ENCODE measurements at regions of chr9 and their contacts with region 1.

Region 1: DNA sequence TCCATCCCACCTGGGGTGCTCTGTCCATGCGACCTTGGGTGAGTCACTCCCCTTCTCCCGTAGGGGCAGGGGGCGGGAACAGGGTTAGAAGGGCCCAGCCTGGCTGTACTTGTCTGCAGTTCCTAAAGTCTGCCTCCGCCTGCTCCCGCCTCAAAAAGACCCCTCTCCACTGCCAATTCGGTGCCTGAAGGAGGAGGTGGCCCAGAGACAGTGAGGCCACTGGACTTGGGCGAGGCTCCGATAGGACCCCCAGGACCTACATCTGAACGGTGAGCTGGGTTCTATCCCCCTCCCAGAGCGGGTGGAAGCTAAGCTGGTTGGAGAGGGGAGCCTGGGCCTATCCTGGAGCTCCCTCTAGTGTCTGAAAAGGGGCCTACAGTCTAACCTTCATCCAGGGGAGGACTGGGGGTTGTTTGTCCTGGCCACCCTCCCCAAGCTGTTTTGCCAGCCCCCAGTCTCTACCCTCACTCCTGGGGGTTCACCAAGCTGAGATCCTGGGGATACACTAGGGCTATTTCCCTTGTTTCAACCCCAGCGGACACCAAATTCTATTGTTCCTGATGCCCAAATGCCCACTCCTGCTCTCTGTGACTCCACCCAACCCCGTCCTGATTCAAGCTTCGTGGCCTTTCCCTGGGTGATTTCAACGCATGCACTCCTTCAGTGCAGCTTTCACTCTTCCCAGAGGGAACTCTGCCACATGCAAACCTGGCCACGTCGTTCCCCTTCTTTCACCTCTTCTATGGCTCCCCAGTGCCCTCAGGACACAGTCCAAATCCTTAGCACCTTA is 6.1 kb upstream of the CRB2 start:
- DNase-seq: peak; percentile 84
- ATAC-seq: peak; percentile 78
- H3K4me3 Mint-ChIP-seq: no peak overlapping the region
- H3K27ac Mint-ChIP-seq: no peak overlapping the region
- H3K4me1 Mint-ChIP-seq: peaks cover 11% of the 10 kb centered on the region
- H3K27me3 Mint-ChIP-seq: peaks cover 15% of the 10 kb centered on the region
- CTCF ChIP-seq: peak; percentile 97

Region 2: DNA sequence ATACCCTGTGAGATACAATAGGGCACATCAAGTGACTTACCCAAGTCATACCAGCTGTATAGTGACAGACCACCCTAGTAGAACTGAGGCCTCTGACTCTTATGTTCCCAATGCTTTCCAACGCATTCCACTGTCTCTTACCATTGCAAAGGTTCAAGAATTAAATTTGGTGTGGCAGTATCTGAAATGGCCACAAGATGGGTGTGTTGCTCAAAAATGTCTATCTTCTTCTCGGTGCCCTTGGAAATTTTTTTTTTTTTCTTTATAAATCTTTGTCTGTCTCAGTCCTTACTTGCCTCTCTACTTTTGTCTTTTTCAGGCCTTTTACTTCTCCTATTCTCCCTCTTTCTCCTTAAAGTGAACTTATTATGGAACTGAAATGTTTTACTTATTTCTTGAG is 268.1 kb before region 1 on chr9:
- CTCF ChIA-PET with region 1: interaction called, 17 read pairs
- POLR2A ChIA-PET with region 1: no interaction called
- DNase-seq: no peak
- ATAC-seq: peak; percentile 79
- H3K4me3 Mint-ChIP-seq: no peak overlapping the region
- H3K27ac Mint-ChIP-seq: no peak overlapping the region
- H3K4me1 Mint-ChIP-seq: peaks cover 36% of the 10 kb centered on the region
- H3K27me3 Mint-ChIP-seq: no peaks in the 10 kb centered on the region
- CTCF ChIP-seq: no peak

Region 3: GRCh38 chr9:123102375-123103110 is 247.3 kb before region 1 on chr9:
- CTCF ChIA-PET with region 1: interaction called, 20 read pairs
- POLR2A ChIA-PET with region 1: no interaction called
- DNase-seq: no peak
- ATAC-seq: peak; percentile 21
- H3K4me3 Mint-ChIP-seq: no peak overlapping the region
- H3K27ac Mint-ChIP-seq: peak overlapping the region; percentile 55
- H3K4me1 Mint-ChIP-seq: peaks cover 29% of the 10 kb centered on the region
- H3K27me3 Mint-ChIP-seq: no peaks in the 10 kb centered on the region
- CTCF ChIP-seq: no peak

Region 4: DNA sequence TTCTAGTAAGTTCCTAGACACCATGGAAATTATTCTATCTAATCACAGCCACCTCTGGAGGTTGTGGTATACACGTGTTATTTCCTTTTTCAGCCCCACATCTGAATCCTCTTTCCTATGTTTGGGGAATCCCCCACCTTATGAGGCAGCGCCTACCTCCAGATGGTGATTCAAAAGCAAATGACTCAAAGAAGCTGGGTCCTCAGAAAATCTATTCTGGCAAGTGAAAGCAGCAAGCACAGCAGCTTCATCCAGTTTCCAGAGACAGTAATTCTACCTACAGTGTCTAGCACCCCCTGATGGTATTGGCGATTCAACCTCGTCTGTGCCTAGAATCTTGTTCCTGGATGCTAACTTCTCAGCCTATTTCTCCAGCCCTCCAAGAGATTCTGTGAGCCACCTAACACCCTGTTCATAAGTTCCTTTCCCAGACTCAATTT is 124.5 kb before region 1 on chr9:
- CTCF ChIA-PET with region 1: interaction called, 10 read pairs
- POLR2A ChIA-PET with region 1: no interaction called
- DNase-seq: peak; percentile 47
- ATAC-seq: peak; percentile 94
- H3K4me3 Mint-ChIP-seq: no peak overlapping the region
- H3K27ac Mint-ChIP-seq: 0 out of 2 replicates have a peak overlapping the region, but pooled peaks have one; percentile 55
- H3K4me1 Mint-ChIP-seq: peaks cover 37% of the 10 kb centered on the region
- H3K27me3 Mint-ChIP-seq: no peaks in the 10 kb centered on the region
- CTCF ChIP-seq: no peak

Region 5: GRCh38 chr9:123312306-123312877 is 37.5 kb before region 1 on chr9:
- CTCF ChIA-PET with region 1: interaction called, 13 read pairs
- POLR2A ChIA-PET with region 1: no interaction called
- DNase-seq: no peak
- ATAC-seq: peak; percentile 72
- H3K4me3 Mint-ChIP-seq: no peak overlapping the region
- H3K27ac Mint-ChIP-seq: no peak overlapping the region
- H3K4me1 Mint-ChIP-seq: peaks cover 4% of the 10 kb centered on the region; the same call in 1 of the 2 replicates
- H3K27me3 Mint-ChIP-seq: no peaks in the 10 kb centered on the region; the same call in 1 of the 2 replicates
- CTCF ChIP-seq: no peak

Region 6: DNA sequence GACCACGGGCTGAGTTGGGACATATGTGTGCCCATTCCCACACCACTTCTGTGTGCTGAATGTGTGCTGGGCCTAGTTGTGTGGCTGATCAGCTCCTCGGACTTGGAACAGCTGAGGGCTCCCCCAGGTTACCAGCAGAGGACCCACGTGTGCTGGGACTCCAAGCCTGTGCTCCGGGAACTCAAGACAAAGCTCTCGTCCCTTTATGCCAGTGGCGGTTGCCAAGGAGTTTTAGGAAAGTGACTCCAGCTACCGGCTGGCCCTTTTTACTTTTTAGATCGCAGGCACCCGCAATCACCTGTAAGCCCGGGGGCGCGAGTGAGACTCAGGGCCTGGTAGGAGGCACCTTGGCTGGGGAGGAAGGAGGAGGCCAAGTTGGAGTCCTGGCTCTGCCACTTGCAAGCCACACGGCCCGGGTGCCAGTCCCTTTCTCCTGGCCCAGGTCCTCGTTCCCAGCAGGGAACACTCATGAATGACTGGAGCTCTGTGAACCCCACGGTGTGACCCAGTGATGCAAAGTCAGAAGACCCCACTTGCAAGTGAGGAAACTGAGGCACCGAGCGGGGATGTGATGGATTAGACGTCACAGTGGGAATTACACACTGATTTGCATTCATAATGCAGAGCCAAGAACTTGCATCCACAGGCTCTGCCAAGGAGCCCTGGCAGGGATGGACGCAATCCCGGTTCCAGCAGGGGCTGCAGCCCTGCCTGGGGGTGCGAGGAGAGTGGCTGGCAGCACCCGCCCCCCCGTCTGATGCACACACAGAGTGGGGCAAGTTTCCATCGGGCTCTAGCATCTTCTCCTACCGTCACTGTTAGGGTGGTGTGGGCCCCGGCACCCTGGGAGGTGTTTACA is 33.0 kb after region 1 on chr9:
- CTCF ChIA-PET with region 1: interaction called, 80 read pairs
- POLR2A ChIA-PET with region 1: no interaction called
- DNase-seq: no peak
- ATAC-seq: no peak
- H3K4me3 Mint-ChIP-seq: no peak overlapping the region
- H3K27ac Mint-ChIP-seq: no peak overlapping the region
- H3K4me1 Mint-ChIP-seq: no peaks in the 10 kb centered on the region
- H3K27me3 Mint-ChIP-seq: no peaks in the 10 kb centered on the region
- CTCF ChIP-seq: no peak

Region 7: GRCh38 chr9:123562844-123563346 is 213.0 kb after region 1 on chr9:
- CTCF ChIA-PET with region 1: no interaction called
- POLR2A ChIA-PET with region 1: no interaction called
- DNase-seq: no peak
- ATAC-seq: no peak
- H3K4me3 Mint-ChIP-seq: no peak overlapping the region
- H3K27ac Mint-ChIP-seq: no peak overlapping the region
- H3K4me1 Mint-ChIP-seq: peaks cover 17% of the 10 kb centered on the region
- H3K27me3 Mint-ChIP-seq: peaks cover 8% of the 10 kb centered on the region
- CTCF ChIP-seq: no peak